Panc1 (cell line): ENCODE measurements at regions of chr9 and their contacts with region 1.

Region 1: GRCh38 chr9:33919276-33919897 is 102.4 kb downstream of the UBE2R2 start:
- DNase-seq: no peak
- ATAC-seq: no peak
- H3K4me3 ChIP-seq: no peak overlapping the region
- H3K27ac ChIP-seq: no peak overlapping the region
- H3K4me1 ChIP-seq: peaks cover under 1% of the 10 kb centered on the region; the same call in 1 of the 2 replicates
- H3K27me3 ChIP-seq: no peaks in the 10 kb centered on the region
- CTCF ChIP-seq: no peak

Region 2: GRCh38 chr9:33687779-33688178 is 231.6 kb before region 1 on chr9:
- CTCF ChIA-PET with region 1: no interaction called
- POLR2A ChIA-PET with region 1: no interaction called
- in situ Hi-C with region 1: no loop called
- intact Hi-C with region 1: no loop called
- DNase-seq: no peak
- ATAC-seq: no peak
- H3K4me3 ChIP-seq: no peak overlapping the region
- H3K27ac ChIP-seq: no peak overlapping the region
- H3K4me1 ChIP-seq: no peaks in the 10 kb centered on the region
- H3K27me3 ChIP-seq: peaks cover 21% of the 10 kb centered on the region
- CTCF ChIP-seq: no peak

Region 3: GRCh38 chr9:33843312-33843961 is 76.0 kb before region 1 on chr9:
- CTCF ChIA-PET with region 1: no interaction called
- POLR2A ChIA-PET with region 1: interaction called, 17 read pairs
- in situ Hi-C with region 1: no loop called
- intact Hi-C with region 1: no loop called
- DNase-seq: no peak
- ATAC-seq: no peak
- H3K4me3 ChIP-seq: no peak overlapping the region
- H3K27ac ChIP-seq: no peak overlapping the region
- H3K4me1 ChIP-seq: peaks cover 5% of the 10 kb centered on the region; the same call in 1 of the 2 replicates
- H3K27me3 ChIP-seq: no peaks in the 10 kb centered on the region
- CTCF ChIP-seq: no peak

Region 4: GRCh38 chr9:34218446-34218845 is 299.1 kb after region 1 on chr9:
- CTCF ChIA-PET with region 1: no interaction called
- POLR2A ChIA-PET with region 1: no interaction called
- in situ Hi-C with region 1: no loop called
- intact Hi-C with region 1: no loop called
- DNase-seq: no peak
- ATAC-seq: peak; percentile 71
- H3K4me3 ChIP-seq: no peak overlapping the region
- H3K27ac ChIP-seq: no peak overlapping the region
- H3K4me1 ChIP-seq: peaks cover 17% of the 10 kb centered on the region
- H3K27me3 ChIP-seq: no peaks in the 10 kb centered on the region
- CTCF ChIP-seq: no peak

Region 5: GRCh38 chr9:34252670-34253459 is 333.5 kb after region 1 on chr9:
- CTCF ChIA-PET with region 1: no interaction called
- POLR2A ChIA-PET with region 1: no interaction called
- in situ Hi-C with region 1: no loop called
- intact Hi-C with region 1: no loop called
- DNase-seq: peak; percentile 46
- ATAC-seq: peak; percentile 73
- H3K4me3 ChIP-seq: no peak overlapping the region
- H3K27ac ChIP-seq: no peak overlapping the region
- H3K4me1 ChIP-seq: peaks cover 21% of the 10 kb centered on the region
- H3K27me3 ChIP-seq: no peaks in the 10 kb centered on the region
- CTCF ChIP-seq: no peak